Heart right ventricle (tissue), 16 donors: ENCODE measurements at regions of chr1 and their contacts with region 1.

Region 1: GRCh38 chr1:61184040-61184713 is 101.8 kb downstream of the NFIA start:
- DNase-seq: peak; percentile 92 to 95
- ATAC-seq: peak; percentile 93 to 98 (median 94)
- H3K4me3 ChIP-seq: peak overlapping the region in 9 of 10 donors; percentile 18 to 57 (median 48)
- H3K27ac ChIP-seq: peak overlapping the region; percentile 72 to 96 (median 88)
- H3K4me1 ChIP-seq: peaks cover 12 to 83% (median 67%) of the 10 kb centered on the region in 9 donors
- H3K27me3 ChIP-seq: no peaks in the 10 kb centered on the region
- CTCF ChIP-seq: no peak

Region 2: GRCh38 chr1:60073605-60074278 is 1110.4 kb before region 1 on chr1 and contains the start of gene C1orf87:
- intact Hi-C with region 1: no loop called
- DNase-seq: peak in 1 of 2 donors; percentile 9
- ATAC-seq: peak in 1 of 8 donors; percentile 13
- H3K4me3 ChIP-seq: no peak within 1 kb of the TSS
- H3K27ac ChIP-seq: no peak within 1 kb of the TSS
- H3K4me1 ChIP-seq: peaks cover 0 to 5% (median 0%) of the 10 kb centered on the region in 9 donors
- H3K27me3 ChIP-seq: peaks cover 0 to 57% (median 45%) of the 10 kb centered on the region in 7 donors
- CTCF ChIP-seq: no peak
- total RNA-seq, gene C1orf87: not detected

Region 3: DNA sequence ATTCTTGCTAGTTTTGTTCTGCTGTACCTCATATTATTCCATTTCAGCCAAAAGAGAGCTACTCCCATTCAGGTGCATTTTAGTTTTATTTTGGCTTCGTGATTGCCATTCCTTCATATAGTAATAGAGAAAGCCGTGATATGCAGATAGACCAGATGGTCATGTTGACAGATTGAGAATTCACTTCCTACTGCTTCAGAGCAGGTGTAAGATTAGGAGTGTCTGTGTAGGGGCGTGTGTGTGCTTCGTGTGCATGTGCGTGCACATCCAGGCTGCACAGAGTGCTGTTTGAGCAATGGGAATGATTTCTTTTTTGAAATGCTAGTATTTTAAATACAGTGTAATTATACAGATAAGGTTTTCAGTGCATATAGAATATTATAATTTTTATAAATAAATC is 91.5 kb before region 1 on chr1:
- intact Hi-C with region 1: loop called in 4 of 10 experiments (anchors 5 to 10 kb)
- DNase-seq: no peak
- ATAC-seq: peak in 4 of 8 donors; percentile 42 to 65 (median 52)
- H3K4me3 ChIP-seq: peak overlapping the region in 2 of 10 donors; percentile 8 to 19
- H3K27ac ChIP-seq: peak overlapping the region in 8 of 10 donors; percentile 4 to 99 (median 37)
- H3K4me1 ChIP-seq: peaks cover 17 to 97% (median 86%) of the 10 kb centered on the region in 9 donors
- H3K27me3 ChIP-seq: no peaks in the 10 kb centered on the region
- CTCF ChIP-seq: no peak

Region 4: DNA sequence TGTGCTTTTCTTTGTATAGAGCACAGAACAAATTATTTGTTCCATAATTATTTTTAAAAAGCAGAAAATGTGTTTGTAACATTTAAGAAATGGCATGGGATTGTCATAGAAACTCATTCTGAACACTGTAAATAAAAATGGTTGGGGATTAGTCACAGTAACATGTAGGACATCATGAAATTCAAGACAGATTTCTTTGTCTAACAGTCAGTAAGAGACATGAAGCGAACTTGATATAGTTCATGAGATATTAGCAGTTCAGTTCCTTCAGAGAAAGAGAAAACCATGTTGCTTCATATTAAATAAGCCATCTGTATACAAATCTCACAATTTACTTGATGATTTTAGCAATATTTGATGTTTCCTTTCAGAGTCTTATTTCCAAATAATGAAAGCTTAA is 82.1 kb before region 1 on chr1:
- intact Hi-C with region 1: loop called in 1 of 10 experiments (anchors 5 kb)
- DNase-seq: no peak
- ATAC-seq: peak in 3 of 8 donors; percentile 16 to 47 (median 25)
- H3K4me3 ChIP-seq: peak overlapping the region in 9 of 10 donors; percentile 1 to 44 (median 38)
- H3K27ac ChIP-seq: peak overlapping the region in 9 of 10 donors; percentile 36 to 84 (median 63)
- H3K4me1 ChIP-seq: peaks cover 8 to 90% (median 77%) of the 10 kb centered on the region in 9 donors
- H3K27me3 ChIP-seq: no peaks in the 10 kb centered on the region
- CTCF ChIP-seq: no peak

Region 5: GRCh38 chr1:61120998-61121397 is 63.2 kb before region 1 on chr1:
- intact Hi-C with region 1: loop called in 2 of 10 experiments (anchors 5 to 10 kb)
- DNase-seq: no peak
- ATAC-seq: peak in 7 of 8 donors; percentile 40 to 83 (median 63)
- H3K4me3 ChIP-seq: peak overlapping the region in 8 of 10 donors; percentile 2 to 39 (median 29)
- H3K27ac ChIP-seq: peak overlapping the region; percentile 36 to 85 (median 65)
- H3K4me1 ChIP-seq: peaks cover 10 to 97% (median 77%) of the 10 kb centered on the region in 9 donors
- H3K27me3 ChIP-seq: no peaks in the 10 kb centered on the region
- CTCF ChIP-seq: no peak

Region 6: GRCh38 chr1:61138921-61139774 is 45.0 kb before region 1 on chr1:
- intact Hi-C with region 1: no loop called
- DNase-seq: no peak
- ATAC-seq: peak in 2 of 8 donors; percentile 22 to 57
- H3K4me3 ChIP-seq: no peak overlapping the region
- H3K27ac ChIP-seq: peak overlapping the region in 3 of 10 donors; percentile 27 to 32 (median 28)
- H3K4me1 ChIP-seq: peaks cover 12 to 66% (median 54%) of the 10 kb centered on the region in 9 donors
- H3K27me3 ChIP-seq: no peaks in the 10 kb centered on the region
- CTCF ChIP-seq: no peak

Region 7: GRCh38 chr1:61253059-61253735 is 69.0 kb after region 1 on chr1:
- intact Hi-C with region 1: loop called in 1 of 10 experiments (anchors 10 kb)
- DNase-seq: peak; percentile 44 to 81
- ATAC-seq: peak; percentile 67 to 82 (median 77)
- H3K4me3 ChIP-seq: no peak overlapping the region
- H3K27ac ChIP-seq: peak overlapping the region in 9 of 10 donors; percentile 23 to 78 (median 70)
- H3K4me1 ChIP-seq: peaks cover 19 to 90% (median 57%) of the 10 kb centered on the region in 9 donors
- H3K27me3 ChIP-seq: no peaks in the 10 kb centered on the region
- CTCF ChIP-seq: no peak

Region 8: DNA sequence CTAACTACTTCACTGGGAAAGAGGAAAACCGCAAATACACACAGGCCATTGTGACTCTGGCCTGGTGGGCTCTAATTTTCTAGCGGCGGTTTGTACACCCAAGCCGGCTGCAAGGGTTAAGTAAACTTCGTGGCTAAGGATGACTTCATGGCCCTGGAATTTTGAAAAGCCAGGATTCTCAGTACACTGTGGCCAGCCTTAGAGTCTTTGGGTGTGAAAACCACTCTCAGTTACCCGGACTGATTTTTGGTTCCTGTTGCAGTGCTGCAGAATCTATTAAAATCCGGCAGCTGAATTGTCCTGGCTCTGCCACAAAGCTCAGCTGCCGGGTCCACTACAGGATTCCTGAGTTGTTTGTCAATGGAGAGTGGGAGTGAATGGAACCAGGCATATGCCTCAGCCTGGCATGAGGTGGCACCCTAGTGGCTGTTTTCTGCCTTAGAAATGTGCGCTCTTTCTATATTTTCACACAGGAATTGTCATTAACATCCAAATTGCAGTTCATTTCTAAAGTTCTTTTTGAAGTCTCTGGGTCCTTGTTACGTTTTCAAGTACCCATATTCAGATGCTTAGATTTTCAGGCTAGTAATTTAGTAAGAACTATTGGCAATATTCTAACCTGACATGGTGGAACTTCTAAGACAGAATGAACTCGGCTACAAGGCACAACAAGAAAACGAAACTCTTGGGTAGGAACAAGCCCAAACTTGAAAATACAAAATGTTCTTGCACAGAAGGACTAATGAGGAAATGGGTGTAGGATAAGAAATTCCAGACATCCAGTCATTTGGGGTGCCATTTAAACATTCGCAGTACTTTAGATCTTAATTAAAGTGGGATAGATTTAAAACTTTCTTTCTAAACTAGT is 154.0 kb after region 1 on chr1:
- intact Hi-C with region 1: loop called in 4 of 10 experiments (anchors 5 to 10 kb)
- DNase-seq: peak; percentile 48 to 74
- ATAC-seq: peak; percentile 69 to 90 (median 87)
- H3K4me3 ChIP-seq: peak overlapping the region in 6 of 10 donors; percentile 11 to 28 (median 19)
- H3K27ac ChIP-seq: peak overlapping the region; percentile 44 to 86 (median 75)
- H3K4me1 ChIP-seq: peaks cover 8 to 64% (median 44%) of the 10 kb centered on the region in 9 donors
- H3K27me3 ChIP-seq: no peaks in the 10 kb centered on the region
- CTCF ChIP-seq: peak; percentile 19 to 80 (median 63)